ENCODE measurements at regions of chr4 and their contacts with region 1.

Region 1: DNA sequence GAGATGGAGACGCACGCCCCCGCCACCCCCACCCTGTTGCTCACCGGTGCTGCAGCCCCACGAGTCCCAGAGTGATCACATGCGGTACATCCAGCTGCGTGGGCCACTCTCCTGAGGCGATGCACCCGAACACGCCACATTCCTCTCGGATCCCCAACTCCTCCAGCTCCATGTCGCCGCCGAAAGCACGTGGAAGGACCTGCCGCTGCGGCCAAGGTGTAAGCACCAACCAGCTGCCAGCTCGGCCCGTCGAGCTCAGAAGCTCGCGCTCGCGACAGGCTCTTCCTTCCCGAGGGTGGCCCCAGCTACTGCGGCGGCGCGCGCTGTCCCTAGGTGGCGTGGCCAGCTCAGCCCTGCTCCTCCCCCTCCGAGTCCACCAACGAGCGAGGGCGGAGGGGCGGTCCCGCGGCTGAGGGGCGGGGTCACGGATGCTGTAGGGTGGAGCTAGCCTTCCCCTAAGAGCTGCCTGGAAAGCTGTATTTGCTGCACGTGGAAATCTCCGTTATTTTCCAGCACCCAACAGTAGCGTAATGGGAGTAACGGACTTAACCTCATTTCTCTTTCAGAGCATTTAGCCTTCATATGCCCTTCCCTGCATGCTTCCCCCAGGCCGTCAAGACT is at the start of gene PPAT:
- DNase-seq: peak; percentile 97 to 99 (median 99)
- ATAC-seq: peak; percentile 84
- H3K4me3 ChIP-seq: peak within 1 kb of the TSS; percentile 83 to 95
- H3K4me3 Mint-ChIP-seq: peak within 1 kb of the TSS; percentile 95
- H3K27ac ChIP-seq: peak within 1 kb of the TSS; percentile 73 to 93
- H3K27ac Mint-ChIP-seq: peak within 1 kb of the TSS; percentile 97
- H3K4me1 ChIP-seq: peaks cover 28% of the 10 kb centered on the region
- H3K4me1 Mint-ChIP-seq: peaks cover 58% of the 10 kb centered on the region
- H3K27me3 ChIP-seq: no peaks in the 10 kb centered on the region
- H3K27me3 Mint-ChIP-seq: no peaks in the 10 kb centered on the region
- CTCF ChIP-seq: no peak
- total RNA-seq, gene PPAT: 6.9 to 7.0 TPM

Region 2: GRCh38 chr4:55395529-55396307 is 1039.7 kb before region 1 on chr4 and contains the start of gene TMEM165:
- CTCF ChIA-PET with region 1: no interaction called
- POLR2A ChIA-PET with region 1: no interaction called
- intact Hi-C with region 1: loop called in 1 of 2 experiments (anchors 5 kb)
- DNase-seq: peak; percentile 72 to 93 (median 86)
- ATAC-seq: peak; percentile 94
- H3K4me3 ChIP-seq: peak within 1 kb of the TSS; percentile 68 to 74
- H3K4me3 Mint-ChIP-seq: peak within 1 kb of the TSS; percentile 97
- H3K27ac ChIP-seq: peak within 1 kb of the TSS; percentile 83 to 93
- H3K27ac Mint-ChIP-seq: peak within 1 kb of the TSS; percentile 98
- H3K4me1 ChIP-seq: peaks cover 36% of the 10 kb centered on the region
- H3K4me1 Mint-ChIP-seq: peaks cover 38% of the 10 kb centered on the region
- H3K27me3 ChIP-seq: no peaks in the 10 kb centered on the region
- H3K27me3 Mint-ChIP-seq: no peaks in the 10 kb centered on the region
- CTCF ChIP-seq: peak; percentile 0
- total RNA-seq, gene TMEM165: 31.0 to 31.5 TPM

Region 3: DNA sequence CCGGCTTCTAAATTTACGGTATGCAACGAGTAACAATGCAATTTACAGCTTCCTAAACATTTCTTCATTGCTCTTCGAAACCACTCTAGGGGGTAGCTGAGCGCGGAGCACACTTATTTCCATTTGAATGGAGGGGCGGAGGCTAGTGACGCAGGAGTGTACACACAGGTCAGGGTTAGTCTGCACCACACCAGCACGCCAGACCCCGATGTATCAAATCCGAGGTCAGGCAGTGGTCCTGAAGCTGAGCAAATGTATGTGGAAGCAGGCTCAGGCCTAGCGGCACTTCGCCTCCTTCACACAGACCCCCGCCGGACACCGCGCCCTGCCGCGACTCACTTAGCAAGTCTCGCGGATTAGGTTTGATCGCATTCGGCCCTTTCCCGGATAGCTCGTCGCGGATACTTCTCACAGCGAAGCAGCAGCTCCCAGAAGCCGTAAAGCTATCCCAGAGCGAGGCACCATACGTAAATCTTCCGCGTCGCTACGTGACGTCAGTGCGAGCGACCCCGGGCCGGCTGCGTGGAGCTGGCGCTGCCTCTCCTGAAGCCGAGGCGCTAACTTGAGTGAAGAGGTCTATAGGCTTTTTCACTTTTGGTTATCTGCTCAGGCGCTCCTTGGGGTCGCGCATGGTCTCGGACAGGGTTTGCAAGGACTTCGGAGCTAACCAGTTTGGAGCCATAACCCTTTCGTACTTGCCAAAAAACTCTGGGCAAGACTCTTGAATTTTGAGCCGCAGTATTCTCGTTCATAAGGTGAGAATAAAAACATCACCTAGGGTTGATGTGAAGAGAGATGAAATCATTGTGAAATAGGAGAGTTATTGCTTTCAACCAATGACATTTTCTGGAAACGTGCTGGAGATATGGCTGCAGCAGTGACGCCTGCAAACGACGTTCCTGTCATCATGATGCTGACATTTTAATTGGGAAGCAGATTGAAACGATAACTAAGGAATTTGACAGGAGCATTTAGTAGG is 48.1 kb before region 1 on chr4 and contains the start of gene AASDH:
- CTCF ChIA-PET with region 1: interaction called, 16 read pairs
- POLR2A ChIA-PET with region 1: interaction called, 75 read pairs
- intact Hi-C with region 1: loop called (anchors 1 kb)
- DNase-seq: peak; percentile 91 to 99 (median 96)
- ATAC-seq: peak; percentile 88
- H3K4me3 ChIP-seq: peak within 1 kb of the TSS; percentile 79 to 82
- H3K4me3 Mint-ChIP-seq: peak within 1 kb of the TSS; percentile 97
- H3K27ac ChIP-seq: peak within 1 kb of the TSS; percentile 93 to 94
- H3K27ac Mint-ChIP-seq: peak within 1 kb of the TSS; percentile 99
- H3K4me1 ChIP-seq: peaks cover 21% of the 10 kb centered on the region
- H3K4me1 Mint-ChIP-seq: peaks cover 46% of the 10 kb centered on the region
- H3K27me3 ChIP-seq: no peaks in the 10 kb centered on the region
- H3K27me3 Mint-ChIP-seq: no peaks in the 10 kb centered on the region
- CTCF ChIP-seq: no peak
- total RNA-seq, gene AASDH: 9.1 to 9.8 TPM

Region 4: DNA sequence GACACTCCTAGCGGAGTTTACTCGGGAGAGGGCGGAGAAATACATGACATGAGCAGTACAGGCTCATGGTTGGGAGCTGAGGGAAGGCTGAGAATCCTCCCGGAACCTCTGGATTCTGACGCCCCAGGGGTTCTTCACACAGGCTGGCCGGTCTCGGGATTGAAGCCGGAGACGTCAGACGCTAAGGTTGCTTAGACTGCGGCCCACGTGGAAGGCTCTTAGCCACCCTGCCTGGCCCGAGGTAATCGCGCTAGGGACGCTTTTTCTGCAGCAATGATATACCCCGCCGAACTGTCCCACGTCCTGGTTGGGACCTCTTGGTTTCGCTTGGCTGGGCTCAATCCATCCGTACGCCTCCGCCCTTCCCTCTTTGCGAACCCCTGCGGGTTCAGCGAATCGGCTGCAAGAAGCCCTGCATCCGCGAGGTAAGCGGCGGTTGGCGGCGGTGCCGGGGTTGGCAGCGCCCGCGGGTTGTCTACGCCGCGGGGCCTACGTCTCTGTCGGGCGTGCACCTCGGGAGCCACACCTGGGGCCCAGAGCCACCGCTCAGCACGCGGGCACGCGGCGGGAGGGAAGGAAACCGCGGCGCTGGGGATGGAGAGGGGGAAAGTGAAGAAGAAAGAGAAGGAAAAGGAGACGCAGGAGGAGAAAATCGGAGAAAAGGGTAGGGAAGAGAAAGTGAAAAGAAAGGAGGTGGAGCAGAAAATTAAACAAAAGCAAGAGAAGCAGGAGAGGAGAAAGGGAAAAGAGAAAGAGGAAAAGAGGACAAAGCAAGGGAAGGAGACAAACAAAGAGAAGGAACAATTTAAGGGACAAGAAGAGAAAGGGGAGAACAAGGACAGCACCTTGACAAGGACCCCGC is 70.1 kb after region 1 on chr4 and contains the start of gene ARL9:
- CTCF ChIA-PET with region 1: no interaction called
- POLR2A ChIA-PET with region 1: no interaction called
- intact Hi-C with region 1: loop called in 1 of 2 experiments (anchors 2 kb)
- DNase-seq: peak; percentile 40 to 83 (median 74)
- ATAC-seq: peak; percentile 97
- H3K4me3 ChIP-seq: peak within 1 kb of the TSS; percentile 50 to 70
- H3K4me3 Mint-ChIP-seq: peak within 1 kb of the TSS; percentile 89
- H3K27ac ChIP-seq: peak within 1 kb of the TSS in 1 of 2 experiments; percentile 26
- H3K27ac Mint-ChIP-seq: peak within 1 kb of the TSS; percentile 82
- H3K4me1 ChIP-seq: peaks cover 15% of the 10 kb centered on the region
- H3K4me1 Mint-ChIP-seq: peaks cover 17% of the 10 kb centered on the region
- H3K27me3 ChIP-seq: no peaks in the 10 kb centered on the region
- H3K27me3 Mint-ChIP-seq: peaks cover 2% of the 10 kb centered on the region
- CTCF ChIP-seq: no peak
- total RNA-seq, gene ARL9: 0.19 TPM in 1 of 2 experiments, not detected in the other

Region 5: GRCh38 chr4:56757821-56758411 is 322.5 kb after region 1 on chr4:
- CTCF ChIA-PET with region 1: no interaction called
- POLR2A ChIA-PET with region 1: interaction called, 9 read pairs
- intact Hi-C with region 1: loop called in 1 of 2 experiments (anchors 1 kb)
- DNase-seq: peak; percentile 26 to 85 (median 65)
- ATAC-seq: peak; percentile 82
- H3K4me3 ChIP-seq: peak overlapping the region; percentile 33 to 44
- H3K4me3 Mint-ChIP-seq: peak overlapping the region; percentile 82
- H3K27ac ChIP-seq: peak overlapping the region; percentile 29 to 81
- H3K27ac Mint-ChIP-seq: peak overlapping the region; percentile 98
- H3K4me1 ChIP-seq: peaks cover 41% of the 10 kb centered on the region
- H3K4me1 Mint-ChIP-seq: peaks cover 60% of the 10 kb centered on the region
- H3K27me3 ChIP-seq: no peaks in the 10 kb centered on the region
- H3K27me3 Mint-ChIP-seq: no peaks in the 10 kb centered on the region
- CTCF ChIP-seq: no peak

Region 6: GRCh38 chr4:56958111-56958517 is 522.7 kb after region 1 on chr4:
- CTCF ChIA-PET with region 1: no interaction called
- POLR2A ChIA-PET with region 1: no interaction called
- intact Hi-C with region 1: no loop called
- DNase-seq: peak in 1 of 9 experiments; percentile 18
- ATAC-seq: no peak
- H3K4me3 ChIP-seq: no peak overlapping the region
- H3K4me3 Mint-ChIP-seq: no peak overlapping the region
- H3K27ac ChIP-seq: no peak overlapping the region
- H3K27ac Mint-ChIP-seq: no peak overlapping the region
- H3K4me1 ChIP-seq: no peaks in the 10 kb centered on the region
- H3K4me1 Mint-ChIP-seq: no peaks in the 10 kb centered on the region
- H3K27me3 ChIP-seq: no peaks in the 10 kb centered on the region
- H3K27me3 Mint-ChIP-seq: no peaks in the 10 kb centered on the region
- CTCF ChIP-seq: no peak

Region 7: GRCh38 chr4:56977321-56978012 is 542.1 kb after region 1 on chr4 and contains the start of gene NOA1:
- CTCF ChIA-PET with region 1: interaction called, 8 read pairs
- POLR2A ChIA-PET with region 1: interaction called, 38 read pairs
- intact Hi-C with region 1: loop called (anchors 1 to 2 kb)
- DNase-seq: peak; percentile 95 to 99 (median 97)
- ATAC-seq: peak; percentile 79
- H3K4me3 ChIP-seq: peak within 1 kb of the TSS; percentile 94 to 100
- H3K4me3 Mint-ChIP-seq: peak within 1 kb of the TSS; percentile 93
- H3K27ac ChIP-seq: peak within 1 kb of the TSS; percentile 78 to 84
- H3K27ac Mint-ChIP-seq: peak within 1 kb of the TSS; percentile 94
- H3K4me1 ChIP-seq: peaks cover 45% of the 10 kb centered on the region
- H3K4me1 Mint-ChIP-seq: peaks cover 56% of the 10 kb centered on the region
- H3K27me3 ChIP-seq: no peaks in the 10 kb centered on the region
- H3K27me3 Mint-ChIP-seq: no peaks in the 10 kb centered on the region
- CTCF ChIP-seq: no peak
- total RNA-seq, gene NOA1: 16.5 to 17.2 TPM

Region 8: DNA sequence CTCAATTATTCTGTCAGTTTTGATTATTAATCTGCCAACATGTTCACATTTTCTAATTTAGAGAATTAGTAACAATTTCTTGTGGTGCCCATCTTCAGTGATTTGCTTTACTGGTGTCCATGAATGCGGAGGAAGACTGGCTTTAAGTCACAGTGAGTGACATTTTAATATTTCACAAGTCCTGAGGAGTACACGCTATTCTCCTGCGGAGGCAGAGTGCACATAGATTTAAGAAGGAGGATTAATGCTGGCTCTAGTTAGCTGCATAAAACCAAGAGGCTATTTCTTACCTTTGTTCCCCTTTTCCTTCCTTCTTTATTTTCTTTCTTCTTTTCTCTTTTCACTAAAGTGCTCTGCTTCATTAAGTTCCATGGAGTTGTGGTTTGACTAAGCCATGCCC is 1170.0 kb after region 1 on chr4:
- CTCF ChIA-PET with region 1: no interaction called
- POLR2A ChIA-PET with region 1: no interaction called
- intact Hi-C with region 1: no loop called
- DNase-seq: no peak
- ATAC-seq: no peak
- H3K4me3 ChIP-seq: no peak overlapping the region
- H3K4me3 Mint-ChIP-seq: no peak overlapping the region
- H3K27ac ChIP-seq: no peak overlapping the region
- H3K27ac Mint-ChIP-seq: no peak overlapping the region
- H3K4me1 ChIP-seq: no peaks in the 10 kb centered on the region
- H3K4me1 Mint-ChIP-seq: no peaks in the 10 kb centered on the region
- H3K27me3 ChIP-seq: no peaks in the 10 kb centered on the region
- H3K27me3 Mint-ChIP-seq: no peaks in the 10 kb centered on the region
- CTCF ChIP-seq: no peak